Activated B cell treated with CpG ODN at 0.5 μM for 24 hours (primary cell): ENCODE measurements at regions of chr2 and their contacts with region 1.

Region 1: DNA sequence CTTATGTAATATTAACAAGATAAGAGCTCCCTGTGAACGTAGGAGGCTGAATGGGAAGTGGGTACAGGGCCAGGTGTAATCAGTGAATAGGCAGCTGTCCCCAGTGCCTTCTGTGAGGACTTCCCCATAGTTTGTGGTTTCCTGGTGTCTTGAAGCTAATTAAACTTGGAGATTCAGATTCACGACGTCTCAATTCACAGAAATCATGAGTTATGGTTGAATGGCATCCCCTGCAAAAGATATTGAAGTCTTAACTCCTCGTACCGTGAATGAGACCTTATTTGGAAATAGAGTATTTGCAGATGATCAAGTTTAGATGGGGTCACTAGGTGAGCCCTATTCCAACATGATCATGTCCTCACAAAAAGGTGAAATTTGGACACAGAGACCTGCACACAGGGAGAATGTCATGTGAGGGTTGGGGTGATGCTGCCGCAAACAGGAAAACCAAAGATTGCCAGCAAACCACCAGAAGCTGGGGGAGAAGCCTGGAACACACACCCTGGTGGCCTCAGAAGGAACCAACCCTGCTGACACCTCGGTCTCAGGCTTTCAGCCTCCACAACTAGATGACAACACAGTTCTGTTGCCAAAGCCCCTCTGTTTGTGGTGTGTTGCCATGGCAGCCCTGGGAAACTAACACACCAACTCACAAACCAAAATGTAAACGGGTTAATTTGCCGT is 13.2 kb downstream of the ARL4C start:
- DNase-seq: peak; percentile 47
- ATAC-seq: peak; percentile 86
- H3K4me3 Mint-ChIP-seq: peak overlapping the region; percentile 73
- H3K27ac Mint-ChIP-seq: peak overlapping the region; percentile 71
- H3K4me1 Mint-ChIP-seq: peaks cover 44% of the 10 kb centered on the region
- H3K27me3 Mint-ChIP-seq: no peaks in the 10 kb centered on the region
- CTCF ChIP-seq: no peak

Region 2: DNA sequence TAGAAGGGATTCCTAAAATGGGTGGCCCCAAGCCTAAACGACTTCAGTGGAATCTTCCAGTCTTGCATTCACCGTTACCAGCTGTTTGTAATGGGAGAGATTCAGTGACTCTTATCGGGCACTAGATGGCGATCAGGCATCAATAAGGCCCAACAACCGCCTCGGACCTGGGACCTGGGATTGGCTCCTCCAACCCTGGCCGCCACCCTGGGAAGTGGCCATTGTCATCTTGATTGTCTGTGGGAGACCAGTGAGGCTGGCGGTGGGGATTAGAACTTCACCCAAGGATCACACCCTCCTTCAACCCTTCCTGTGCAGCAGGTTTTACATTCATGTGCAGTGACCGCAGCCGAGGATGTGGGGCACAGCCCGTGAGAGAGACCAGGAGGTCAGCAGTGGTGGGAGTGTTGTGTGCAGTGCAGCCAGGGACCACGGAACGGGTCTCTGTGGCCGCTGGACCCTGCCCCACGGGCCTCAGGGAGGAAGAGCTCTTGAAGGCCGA is 347.9 kb before region 1 on chr2:
- CTCF ChIA-PET with region 1: interaction called, 10 read pairs
- POLR2A ChIA-PET with region 1: no interaction called
- intact Hi-C with region 1: no loop called
- DNase-seq: peak; percentile 32
- ATAC-seq: peak; percentile 75
- H3K4me3 Mint-ChIP-seq: no peak overlapping the region
- H3K27ac Mint-ChIP-seq: peak overlapping the region; percentile 20
- H3K4me1 Mint-ChIP-seq: peaks cover 8% of the 10 kb centered on the region
- H3K27me3 Mint-ChIP-seq: peaks cover 30% of the 10 kb centered on the region
- CTCF ChIP-seq: no peak

Region 3: DNA sequence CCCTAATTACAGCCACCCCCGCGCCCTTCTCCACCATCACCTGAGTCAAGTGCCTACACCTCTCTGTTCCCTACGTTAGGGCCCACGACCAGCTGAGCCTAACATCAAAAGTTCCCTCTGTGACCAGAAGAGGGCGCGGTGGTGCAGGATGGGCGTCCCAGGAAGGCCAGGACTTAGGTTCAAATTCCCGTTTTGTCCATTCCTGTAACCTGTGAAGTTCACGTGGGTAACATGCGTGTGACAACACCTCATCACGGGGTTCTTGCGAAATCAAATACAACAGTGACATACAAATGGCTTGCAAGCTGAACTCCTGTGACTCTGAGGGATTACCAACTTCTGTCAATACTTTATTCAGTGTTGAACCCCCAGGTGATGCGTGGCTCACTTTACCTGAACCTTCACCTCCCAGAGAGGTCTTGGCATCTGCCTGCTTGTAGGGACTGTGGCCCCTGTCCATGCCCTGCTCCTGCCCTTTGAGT is 194.7 kb before region 1 on chr2:
- CTCF ChIA-PET with region 1: interaction called, 9 read pairs
- POLR2A ChIA-PET with region 1: interaction called, 11 read pairs
- intact Hi-C with region 1: loop called (anchors 1 kb)
- DNase-seq: peak; percentile 50
- ATAC-seq: no peak
- H3K4me3 Mint-ChIP-seq: no peak overlapping the region
- H3K27ac Mint-ChIP-seq: no peak overlapping the region
- H3K4me1 Mint-ChIP-seq: peaks cover 54% of the 10 kb centered on the region
- H3K27me3 Mint-ChIP-seq: peaks cover 17% of the 10 kb centered on the region
- CTCF ChIP-seq: no peak

Region 4: DNA sequence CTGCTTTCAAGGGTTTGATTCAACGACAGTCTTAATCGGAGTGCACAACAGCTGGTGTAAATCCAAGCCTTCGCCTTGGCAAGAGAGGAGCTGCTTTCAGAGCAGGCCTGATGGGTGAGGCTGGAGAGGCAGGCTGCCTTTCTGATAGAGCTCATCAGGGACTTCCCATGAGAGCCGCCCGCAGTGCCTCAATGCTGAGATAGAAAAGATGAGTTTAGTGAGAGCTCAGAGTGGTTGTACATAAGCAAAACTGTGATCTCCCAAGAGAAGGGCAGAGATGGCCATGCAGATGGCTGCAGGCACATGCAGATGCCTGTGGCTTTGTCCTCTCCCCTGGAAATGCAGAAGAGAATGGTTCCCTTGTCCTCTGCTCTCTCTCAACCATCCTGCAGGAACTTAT is 109.0 kb before region 1 on chr2:
- CTCF ChIA-PET with region 1: no interaction called
- POLR2A ChIA-PET with region 1: no interaction called
- intact Hi-C with region 1: loop called (anchors 5 kb)
- DNase-seq: no peak
- ATAC-seq: no peak
- H3K4me3 Mint-ChIP-seq: no peak overlapping the region
- H3K27ac Mint-ChIP-seq: no peak overlapping the region
- H3K4me1 Mint-ChIP-seq: no peaks in the 10 kb centered on the region
- H3K27me3 Mint-ChIP-seq: peaks cover 30% of the 10 kb centered on the region
- CTCF ChIP-seq: no peak

Region 5: GRCh38 chr2:234425619-234426603 is 57.8 kb before region 1 on chr2:
- CTCF ChIA-PET with region 1: interaction called, 7 read pairs
- POLR2A ChIA-PET with region 1: interaction called, 30 read pairs
- intact Hi-C with region 1: loop called (anchors 1 kb)
- DNase-seq: peak; percentile 62
- ATAC-seq: peak; percentile 92
- H3K4me3 Mint-ChIP-seq: peak overlapping the region; percentile 68
- H3K27ac Mint-ChIP-seq: peak overlapping the region; percentile 82
- H3K4me1 Mint-ChIP-seq: peaks cover 83% of the 10 kb centered on the region
- H3K27me3 Mint-ChIP-seq: no peaks in the 10 kb centered on the region
- CTCF ChIP-seq: no peak

Region 6: GRCh38 chr2:234454433-234454832 is 29.3 kb before region 1 on chr2:
- CTCF ChIA-PET with region 1: no interaction called
- POLR2A ChIA-PET with region 1: interaction called, 7 read pairs
- intact Hi-C with region 1: loop called (anchors 2 kb)
- DNase-seq: no peak
- ATAC-seq: peak; percentile 82
- H3K4me3 Mint-ChIP-seq: peak overlapping the region; percentile 36
- H3K27ac Mint-ChIP-seq: peak overlapping the region; percentile 47
- H3K4me1 Mint-ChIP-seq: peaks cover 62% of the 10 kb centered on the region
- H3K27me3 Mint-ChIP-seq: no peaks in the 10 kb centered on the region
- CTCF ChIP-seq: no peak